GM12878 (cell line): ENCODE measurements at regions of chr16 and their contacts with region 1.

Region 1: GRCh38 chr16:57039148-57039812 is 49.9 kb downstream of the NLRC5 start:
- DNase-seq: peak; percentile 65
- ATAC-seq: peak; percentile 11
- H3K4me3 ChIP-seq: no peak overlapping the region
- H3K27ac ChIP-seq: peak overlapping the region; percentile 78
- H3K4me1 ChIP-seq: peaks cover 62% of the 10 kb centered on the region
- H3K27me3 ChIP-seq: no peaks in the 10 kb centered on the region
- CTCF ChIP-seq: no peak
- EP300 ChIP-seq: no peak
- POLR2A ChIP-seq: peak; percentile 33; the same call in 1 of the 2 replicates
- RAD21 ChIP-seq: no peak

Region 2: GRCh38 chr16:56903866-56904265 is 135.4 kb before region 1 on chr16:
- CTCF ChIA-PET with region 1: no interaction called
- POLR2A ChIA-PET with region 1: no interaction called
- RAD21 ChIA-PET with region 1: no interaction called
- SMC1A ChIA-PET with region 1: no interaction called
- in situ Hi-C with region 1: no loop called
- intact Hi-C with region 1: no loop called
- DNase-seq: no peak
- ATAC-seq: no peak
- H3K4me3 ChIP-seq: no peak overlapping the region
- H3K27ac ChIP-seq: no peak overlapping the region
- H3K4me1 ChIP-seq: peaks cover 8% of the 10 kb centered on the region
- H3K27me3 ChIP-seq: peaks cover 0 to 6% of the 10 kb centered on the region in 2 experiments; a peak in 2 of 4 replicates
- CTCF ChIP-seq: no peak
- EP300 ChIP-seq: no peak
- POLR2A ChIP-seq: no peak
- RAD21 ChIP-seq: no peak

Region 3: GRCh38 chr16:57023541-57024249 is 15.6 kb before region 1 on chr16:
- CTCF ChIA-PET with region 1: interaction called, 10 read pairs
- POLR2A ChIA-PET with region 1: interaction called, 8 read pairs
- RAD21 ChIA-PET with region 1: interaction called, 21 read pairs
- SMC1A ChIA-PET with region 1: interaction called, 14 read pairs
- in situ Hi-C with region 1: no loop called
- intact Hi-C with region 1: no loop called
- DNase-seq: no peak
- ATAC-seq: peak; percentile 58
- H3K4me3 ChIP-seq: no peak overlapping the region
- H3K27ac ChIP-seq: no peak overlapping the region
- H3K4me1 ChIP-seq: no peaks in the 10 kb centered on the region; the same call in 1 of the 2 replicates
- H3K27me3 ChIP-seq: no peaks in the 10 kb centered on the region
- CTCF ChIP-seq: no peak
- EP300 ChIP-seq: no peak
- POLR2A ChIP-seq: no peak
- RAD21 ChIP-seq: no peak